IMR-90 (cell line): ENCODE measurements at regions of chr10 and their contacts with region 1.

Region 1: GRCh38 chr10:68586606-68587305 is 26.6 kb downstream of the TET1 start:
- DNase-seq: peak; percentile 37
- ATAC-seq: peak; percentile 32; the same call in 1 of the 2 replicates
- H3K4me3 ChIP-seq: no peak overlapping the region
- H3K27ac ChIP-seq: no peak overlapping the region
- H3K4me1 ChIP-seq: peaks cover 1% of the 10 kb centered on the region; the same call in 1 of the 2 replicates
- H3K27me3 ChIP-seq: no peaks in the 10 kb centered on the region
- CTCF ChIP-seq: no peak
- POLR2A ChIP-seq: no peak
- RAD21 ChIP-seq: no peak

Region 2: GRCh38 chr10:68655620-68656126 is 68.9 kb after region 1 on chr10:
- CTCF ChIA-PET with region 1: interaction called, 10 read pairs
- POLR2A ChIA-PET with region 1: no interaction called
- dilution Hi-C with region 1: no loop called
- in situ Hi-C with region 1: no loop called
- intact Hi-C with region 1: no loop called
- DNase-seq: no peak
- ATAC-seq: no peak
- H3K4me3 ChIP-seq: no peak overlapping the region
- H3K27ac ChIP-seq: no peak overlapping the region
- H3K4me1 ChIP-seq: no peaks in the 10 kb centered on the region
- H3K27me3 ChIP-seq: no peaks in the 10 kb centered on the region
- CTCF ChIP-seq: no peak
- POLR2A ChIP-seq: no peak
- RAD21 ChIP-seq: no peak